Activated CD8-positive, alpha-beta memory T cell treated with anti-CD3 and anti-CD28 coated beads, Interleukin-2, amount 10 ng/mL, durations not matched to agents 7 days and 5 days (primary cell): ENCODE measurements at regions of chr15 and their contacts with region 1.

Region 1: GRCh38 chr15:68875377-68876116 is 54.8 kb upstream of the SPESP1 start:
- DNase-seq: peak; percentile 91
- ATAC-seq: peak; percentile 82
- H3K4me3 Mint-ChIP-seq: no peak overlapping the region
- H3K27ac Mint-ChIP-seq: no peak overlapping the region
- H3K4me1 Mint-ChIP-seq: peaks cover 4% of the 10 kb centered on the region
- H3K27me3 Mint-ChIP-seq: peaks cover 40% of the 10 kb centered on the region

Region 2: GRCh38 chr15:68550481-68551295 is 324.9 kb before region 1 on chr15:
- CTCF ChIA-PET with region 1: interaction called, 25 read pairs
- DNase-seq: peak; percentile 82
- ATAC-seq: no peak
- H3K4me3 Mint-ChIP-seq: no peak overlapping the region
- H3K27ac Mint-ChIP-seq: no peak overlapping the region
- H3K4me1 Mint-ChIP-seq: peaks cover 10% of the 10 kb centered on the region
- H3K27me3 Mint-ChIP-seq: peaks cover 43% of the 10 kb centered on the region

Region 3: DNA sequence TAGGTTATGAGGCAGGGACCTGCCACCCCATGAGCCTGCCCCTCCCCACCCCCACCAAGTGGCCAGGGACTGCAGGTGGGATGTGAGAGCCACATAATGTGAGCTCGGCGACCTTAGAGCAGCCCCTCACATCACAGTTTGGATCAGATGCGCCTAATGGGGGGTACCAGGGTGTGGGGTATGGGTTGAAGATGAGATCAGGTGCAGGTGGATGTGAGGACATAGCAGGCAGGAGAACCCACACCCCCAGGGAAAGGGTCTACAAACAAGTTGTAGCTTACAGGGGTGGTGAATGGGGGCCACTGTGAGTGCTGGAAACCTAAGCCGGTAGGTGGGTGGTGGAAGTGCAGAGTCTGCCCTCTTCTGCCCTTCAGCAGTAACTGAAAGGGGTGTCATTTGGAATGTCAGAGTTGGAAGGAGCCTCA is 202.8 kb before region 1 on chr15:
- CTCF ChIA-PET with region 1: interaction called, 13 read pairs
- DNase-seq: no peak
- ATAC-seq: no peak
- H3K4me3 Mint-ChIP-seq: no peak overlapping the region
- H3K27ac Mint-ChIP-seq: no peak overlapping the region
- H3K4me1 Mint-ChIP-seq: peaks cover 2% of the 10 kb centered on the region
- H3K27me3 Mint-ChIP-seq: peaks cover 21% of the 10 kb centered on the region

Region 4: GRCh38 chr15:68783226-68784058 is 92.1 kb before region 1 on chr15:
- CTCF ChIA-PET with region 1: interaction called, 41 read pairs
- DNase-seq: peak; percentile 73
- ATAC-seq: peak; percentile 86
- H3K4me3 Mint-ChIP-seq: no peak overlapping the region
- H3K27ac Mint-ChIP-seq: peak overlapping the region; percentile 70
- H3K4me1 Mint-ChIP-seq: peaks cover 51% of the 10 kb centered on the region
- H3K27me3 Mint-ChIP-seq: no peaks in the 10 kb centered on the region

Region 5: DNA sequence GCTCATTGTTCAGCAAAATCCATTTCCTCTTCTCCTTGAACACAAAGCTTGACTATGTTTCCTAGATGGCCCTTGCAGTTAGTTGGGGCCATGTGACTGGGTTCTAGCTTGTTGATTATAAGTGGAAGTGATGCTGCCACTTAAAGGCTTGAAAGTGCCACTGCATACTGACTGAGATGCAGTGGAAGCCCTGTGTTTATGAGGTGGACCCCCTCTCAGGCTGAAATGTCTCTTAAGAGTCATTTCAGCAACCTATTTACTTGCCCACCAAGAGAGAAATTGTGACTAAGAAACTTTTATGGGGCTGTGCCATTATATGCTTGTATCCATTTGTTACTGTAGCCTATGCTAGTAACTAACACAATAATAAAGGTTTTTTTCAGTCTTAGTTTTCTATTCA is 46.5 kb before region 1 on chr15:
- CTCF ChIA-PET with region 1: interaction called, 13 read pairs
- DNase-seq: peak; percentile 54
- ATAC-seq: peak; percentile 79
- H3K4me3 Mint-ChIP-seq: no peak overlapping the region
- H3K27ac Mint-ChIP-seq: no peak overlapping the region
- H3K4me1 Mint-ChIP-seq: peaks cover 15% of the 10 kb centered on the region
- H3K27me3 Mint-ChIP-seq: peaks cover 16% of the 10 kb centered on the region